ENCODE measurements at regions of chr6 and their contacts with region 1.

Region 1: DNA sequence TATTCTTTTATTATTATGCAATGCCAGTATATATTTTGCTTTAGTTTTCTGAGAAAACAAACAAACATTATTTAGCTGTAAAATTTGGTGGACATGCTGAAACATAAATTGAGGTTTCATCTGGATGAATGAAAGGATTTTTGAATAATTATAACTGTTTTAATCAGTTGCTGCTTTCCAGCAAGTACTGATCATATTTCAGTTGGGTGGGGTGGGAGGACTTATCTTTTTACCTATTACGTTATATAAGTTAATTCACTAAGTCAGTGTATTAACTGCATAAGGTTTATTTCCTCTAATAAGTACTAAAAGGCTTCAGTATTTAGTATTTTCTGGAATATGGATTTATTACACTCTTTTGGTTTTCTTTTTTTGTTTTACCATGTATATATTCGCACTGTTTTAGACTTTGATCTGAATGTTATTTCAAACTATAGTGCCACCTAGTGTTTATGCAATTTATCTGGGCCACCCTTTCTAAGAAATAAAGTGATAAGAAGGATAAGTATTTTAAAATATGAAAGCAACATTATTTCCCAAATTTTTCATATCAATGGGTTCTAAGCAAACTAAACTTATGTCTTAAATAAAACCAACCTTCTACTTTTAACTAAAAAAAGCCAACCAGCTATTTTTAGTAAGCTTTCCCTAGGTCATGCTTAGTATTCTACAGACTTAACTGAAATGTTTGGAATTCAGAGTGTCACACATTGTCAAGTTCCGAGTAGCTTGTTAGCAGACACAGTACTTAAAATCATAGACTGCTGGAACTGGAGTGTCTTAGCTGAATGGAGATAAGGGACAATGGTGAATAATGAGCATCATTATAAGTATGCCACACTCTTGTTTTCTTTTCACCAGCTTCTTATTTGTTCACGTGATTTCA is 105.4 kb upstream of the MCHR2 start:
- DNase-seq: no peak
- H3K4me3 ChIP-seq: no peak overlapping the region
- H3K27ac ChIP-seq: no peak overlapping the region
- H3K4me1 ChIP-seq: no peaks in the 10 kb centered on the region
- H3K27me3 ChIP-seq: peaks cover 47% of the 10 kb centered on the region
- CTCF ChIP-seq: peak; percentile 53

Region 2: DNA sequence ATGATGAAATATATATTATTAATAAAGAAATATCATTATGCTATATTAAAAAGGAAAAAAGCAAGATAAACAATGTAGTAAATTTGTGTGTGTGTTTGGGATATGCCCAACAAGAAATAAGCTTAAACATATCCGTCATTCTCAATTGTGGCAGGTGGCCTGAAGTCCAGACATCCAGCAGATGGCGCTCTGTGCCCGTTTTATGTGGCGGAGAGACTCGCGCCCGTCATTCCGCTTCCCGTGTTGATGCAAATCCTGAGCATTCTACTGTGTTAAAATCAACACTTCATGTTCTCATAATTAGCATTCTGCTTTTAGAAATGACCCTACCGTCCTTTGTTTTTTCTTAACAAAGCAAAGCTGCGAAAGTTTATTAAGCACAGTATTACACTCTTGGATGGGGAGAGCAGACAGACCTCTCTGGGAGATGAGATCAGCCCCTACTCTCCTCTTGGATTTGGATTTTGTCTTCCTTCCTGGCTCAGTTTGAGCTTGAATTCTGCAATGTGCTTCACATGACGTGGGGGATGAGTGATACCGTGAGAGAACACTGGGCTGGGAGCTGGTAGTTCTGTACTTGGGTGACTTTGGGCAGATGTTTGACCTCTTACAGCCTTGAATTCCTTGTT is 231.2 kb before region 1 on chr6:
- intact Hi-C with region 1: loop called (anchors 10 kb)
- DNase-seq: peak; percentile 61
- H3K4me3 ChIP-seq: no peak overlapping the region
- H3K27ac ChIP-seq: no peak overlapping the region
- H3K4me1 ChIP-seq: peaks cover 3% of the 10 kb centered on the region
- H3K27me3 ChIP-seq: peaks cover 40% of the 10 kb centered on the region
- CTCF ChIP-seq: peak; percentile 83

Region 3: GRCh38 chr6:100657678-100658330 is 558.4 kb after region 1 on chr6:
- intact Hi-C with region 1: loop called (anchors 5 kb)
- DNase-seq: no peak
- H3K4me3 ChIP-seq: no peak overlapping the region
- H3K27ac ChIP-seq: no peak overlapping the region
- H3K4me1 ChIP-seq: no peaks in the 10 kb centered on the region
- H3K27me3 ChIP-seq: no peaks in the 10 kb centered on the region
- CTCF ChIP-seq: peak; percentile 45

Measured in left ventricle myocardium inferior (tissue), 1 donor.